Activated B cell treated with CpG ODN at 0.5 μM for 24 hours (primary cell): ENCODE measurements at regions of chr14 and their contacts with region 1.

Region 1: GRCh38 chr14:61894452-61895077 is 132.3 kb downstream of the SNAPC1 start:
- DNase-seq: peak; percentile 30
- ATAC-seq: no peak
- H3K4me3 Mint-ChIP-seq: no peak overlapping the region
- H3K27ac Mint-ChIP-seq: no peak overlapping the region
- H3K4me1 Mint-ChIP-seq: peaks cover 30% of the 10 kb centered on the region
- H3K27me3 Mint-ChIP-seq: no peaks in the 10 kb centered on the region
- CTCF ChIP-seq: peak; percentile 57

Region 2: GRCh38 chr14:61388173-61388975 is 506.2 kb before region 1 on chr14:
- CTCF ChIA-PET with region 1: no interaction called
- POLR2A ChIA-PET with region 1: no interaction called
- intact Hi-C with region 1: no loop called
- DNase-seq: no peak
- ATAC-seq: peak; percentile 71
- H3K4me3 Mint-ChIP-seq: peak overlapping the region; percentile 32
- H3K27ac Mint-ChIP-seq: peak overlapping the region; percentile 64
- H3K4me1 Mint-ChIP-seq: peaks cover 16% of the 10 kb centered on the region
- H3K27me3 Mint-ChIP-seq: peaks cover 6% of the 10 kb centered on the region
- CTCF ChIP-seq: no peak

Region 3: DNA sequence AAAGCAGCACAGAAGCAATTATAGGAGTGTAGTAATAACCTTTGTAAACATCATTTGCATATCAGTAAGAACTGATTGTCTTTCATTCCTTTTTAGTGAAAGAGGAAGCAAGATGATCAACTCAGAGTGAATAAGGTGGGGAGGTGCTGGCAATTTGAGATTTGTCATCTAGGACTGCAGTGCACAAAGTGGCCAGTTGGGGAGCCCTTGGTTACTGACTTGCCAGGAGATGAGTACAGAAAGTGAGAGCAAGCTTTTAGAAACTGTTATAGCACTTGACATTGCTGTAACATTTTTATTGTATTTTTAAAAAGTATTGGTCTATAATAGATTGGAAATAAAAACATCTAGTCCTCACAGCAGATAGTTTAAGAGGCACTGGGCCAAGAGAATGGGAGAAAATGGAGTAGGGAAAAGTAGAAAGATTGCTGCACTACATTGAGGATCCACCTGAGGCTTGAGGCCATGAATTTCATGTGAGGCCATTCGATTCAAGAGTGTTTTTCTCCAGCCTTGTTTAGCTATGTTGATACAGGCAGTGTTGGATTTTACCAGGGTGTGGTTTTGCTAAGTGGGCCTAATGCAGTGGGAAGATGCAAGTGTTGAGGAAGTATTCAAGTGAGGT is 34.2 kb before region 1 on chr14:
- CTCF ChIA-PET with region 1: interaction called, 10 read pairs
- POLR2A ChIA-PET with region 1: no interaction called
- intact Hi-C with region 1: loop called (anchors 2 kb)
- DNase-seq: peak; percentile 53
- ATAC-seq: peak; percentile 100
- H3K4me3 Mint-ChIP-seq: no peak overlapping the region
- H3K27ac Mint-ChIP-seq: no peak overlapping the region
- H3K4me1 Mint-ChIP-seq: peaks cover 6% of the 10 kb centered on the region
- H3K27me3 Mint-ChIP-seq: peaks cover 4% of the 10 kb centered on the region
- CTCF ChIP-seq: peak; percentile 25

Region 4: GRCh38 chr14:61866932-61867920 is 27.3 kb before region 1 on chr14:
- CTCF ChIA-PET with region 1: interaction called, 4 read pairs
- POLR2A ChIA-PET with region 1: interaction called, 5 read pairs
- intact Hi-C with region 1: loop called (anchors 1 kb)
- DNase-seq: no peak
- ATAC-seq: peak; percentile 88
- H3K4me3 Mint-ChIP-seq: peak overlapping the region; percentile 8
- H3K27ac Mint-ChIP-seq: no peak overlapping the region
- H3K4me1 Mint-ChIP-seq: peaks cover 15% of the 10 kb centered on the region
- H3K27me3 Mint-ChIP-seq: no peaks in the 10 kb centered on the region
- CTCF ChIP-seq: no peak

Region 5: DNA sequence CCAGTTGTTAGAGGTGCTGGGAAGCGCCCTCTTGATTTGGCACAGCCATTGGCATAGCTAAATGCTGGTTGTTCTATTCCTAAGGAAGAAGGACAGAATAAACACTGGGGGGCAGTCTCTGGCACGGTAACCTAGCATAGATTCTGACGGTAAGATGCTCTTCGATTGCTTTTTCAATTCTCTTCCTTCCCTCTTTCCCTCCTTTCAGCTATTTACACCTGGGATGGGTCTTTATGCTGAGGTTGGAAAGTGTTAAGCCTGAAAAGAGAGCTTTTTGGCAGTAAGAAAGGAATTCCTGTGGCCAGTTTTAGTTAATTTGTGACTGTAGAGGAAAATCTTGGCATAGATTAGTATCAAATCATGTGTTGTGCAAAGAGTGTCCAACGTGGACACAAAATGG is 30.5 kb after region 1 on chr14:
- CTCF ChIA-PET with region 1: interaction called, 10 read pairs
- POLR2A ChIA-PET with region 1: no interaction called
- intact Hi-C with region 1: loop called (anchors 2 kb)
- DNase-seq: no peak
- ATAC-seq: peak; percentile 70
- H3K4me3 Mint-ChIP-seq: peak overlapping the region; percentile 21
- H3K27ac Mint-ChIP-seq: no peak overlapping the region
- H3K4me1 Mint-ChIP-seq: peaks cover 20% of the 10 kb centered on the region
- H3K27me3 Mint-ChIP-seq: no peaks in the 10 kb centered on the region
- CTCF ChIP-seq: peak; percentile 45

Region 6: GRCh38 chr14:62253911-62254310 is 359.3 kb after region 1 on chr14:
- CTCF ChIA-PET with region 1: no interaction called
- POLR2A ChIA-PET with region 1: no interaction called
- intact Hi-C with region 1: no loop called
- DNase-seq: no peak
- ATAC-seq: no peak
- H3K4me3 Mint-ChIP-seq: no peak overlapping the region
- H3K27ac Mint-ChIP-seq: no peak overlapping the region
- H3K4me1 Mint-ChIP-seq: no peaks in the 10 kb centered on the region
- H3K27me3 Mint-ChIP-seq: peaks cover 4% of the 10 kb centered on the region
- CTCF ChIP-seq: no peak